H1 (cell line): ENCODE measurements at regions of chr11 and their contacts with region 1.

Region 1: GRCh38 chr11:17328871-17329494 is 22.6 kb upstream of the NCR3LG1 start:
- DNase-seq: peak in 1 of 2 experiments; percentile 49
- H3K4me3 ChIP-seq: no peak overlapping the region
- H3K27ac ChIP-seq: no peak overlapping the region
- H3K4me1 ChIP-seq: peaks cover 0 to 2% (median 0%) of the 10 kb centered on the region in 4 experiments; a peak in 1 of 7 replicates
- H3K27me3 ChIP-seq: no peaks in the 10 kb centered on the region
- CTCF ChIP-seq: peak; percentile 16 to 50 (median 43); a peak in 3 of 4 replicates
- EP300 ChIP-seq: no peak
- POLR2A ChIP-seq: no peak
- RAD21 ChIP-seq: no peak; a peak in 1 of 4 replicates

Region 2: GRCh38 chr11:17314232-17314547 is 14.8 kb before region 1 on chr11:
- CTCF ChIA-PET with region 1: interaction called, 19 read pairs
- POLR2A ChIA-PET with region 1: no interaction called
- DNase-seq: no peak
- H3K4me3 ChIP-seq: no peak overlapping the region
- H3K27ac ChIP-seq: no peak overlapping the region
- H3K4me1 ChIP-seq: no peaks in the 10 kb centered on the region
- H3K27me3 ChIP-seq: no peaks in the 10 kb centered on the region
- CTCF ChIP-seq: no peak
- EP300 ChIP-seq: no peak
- POLR2A ChIP-seq: no peak
- RAD21 ChIP-seq: no peak

Region 3: DNA sequence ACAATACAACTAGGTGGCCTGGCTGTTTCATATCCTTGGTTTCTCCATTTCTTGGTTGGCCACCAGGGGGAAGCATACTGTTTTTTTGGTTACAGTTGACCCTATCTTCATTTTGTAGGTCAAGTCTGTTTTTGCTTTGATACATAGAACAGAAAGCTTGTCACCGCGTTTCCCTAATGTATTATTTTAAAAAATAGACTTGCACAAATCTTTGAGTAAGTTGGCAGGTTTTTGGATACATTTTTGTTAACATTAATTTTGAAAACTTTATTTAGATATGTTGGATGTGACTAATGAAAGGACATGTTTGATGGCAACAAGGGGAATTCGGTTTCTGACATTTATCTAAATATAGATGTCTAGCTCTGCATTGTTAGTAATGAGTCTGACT is 25.6 kb after region 1 on chr11:
- CTCF ChIA-PET with region 1: interaction called, 12 read pairs
- POLR2A ChIA-PET with region 1: no interaction called
- DNase-seq: peak in 1 of 2 experiments; percentile 80
- H3K4me3 ChIP-seq: no peak overlapping the region
- H3K27ac ChIP-seq: no peak overlapping the region
- H3K4me1 ChIP-seq: peaks cover 0 to 8% (median 4%) of the 10 kb centered on the region in 4 experiments; a peak in 5 of 7 replicates
- H3K27me3 ChIP-seq: peaks cover 29 to 47% (median 40%) of the 10 kb centered on the region in 4 experiments
- CTCF ChIP-seq: peak in 2 of 3 experiments; percentile 54 to 59; a peak in 2 of 4 replicates
- EP300 ChIP-seq: no peak
- POLR2A ChIP-seq: no peak
- RAD21 ChIP-seq: peak; percentile 26 to 54; a peak in 3 of 4 replicates

Region 4: GRCh38 chr11:17803754-17804334 is 474.9 kb after region 1 on chr11:
- CTCF ChIA-PET with region 1: no interaction called
- POLR2A ChIA-PET with region 1: no interaction called
- DNase-seq: no peak
- H3K4me3 ChIP-seq: no peak overlapping the region
- H3K27ac ChIP-seq: no peak overlapping the region
- H3K4me1 ChIP-seq: peaks cover 0 to 11% (median 4%) of the 10 kb centered on the region in 4 experiments; a peak in 5 of 7 replicates
- H3K27me3 ChIP-seq: no peaks in the 10 kb centered on the region; a peak in 1 of 7 replicates
- CTCF ChIP-seq: no peak
- EP300 ChIP-seq: no peak
- POLR2A ChIP-seq: no peak
- RAD21 ChIP-seq: no peak